A549 (cell line): ENCODE measurements at regions of chr2 and their contacts with region 1.

Region 1: GRCh38 chr2:113138428-113139322 is 11.3 kb downstream of the IL1RN start:
- DNase-seq: peak; percentile 52 to 76
- ATAC-seq: peak; percentile 65 to 88; a peak in 5 of 6 replicates
- H3K4me3 ChIP-seq: no peak overlapping the region
- H3K27ac ChIP-seq: peak overlapping the region; percentile 44 to 66; a peak in 5 of 6 replicates
- H3K4me1 ChIP-seq: 0 out of 3 replicates have a peak, but pooled peaks cover 4% of the 10 kb centered on the region
- CTCF ChIP-seq: peak; percentile 87
- EP300 ChIP-seq: no peak
- POLR2A ChIP-seq: no peak
- RAD21 ChIP-seq: peak; percentile 69 to 74

Region 2: GRCh38 chr2:112229348-112229747 is 909.3 kb before region 1 on chr2:
- CTCF ChIA-PET with region 1: no interaction called
- POLR2A ChIA-PET with region 1: no interaction called
- DNase-seq: peak in 1 of 2 experiments; percentile 33
- ATAC-seq: no peak
- H3K4me3 ChIP-seq: no peak overlapping the region
- H3K27ac ChIP-seq: no peak overlapping the region
- H3K4me1 ChIP-seq: no peaks in the 10 kb centered on the region
- CTCF ChIP-seq: no peak
- EP300 ChIP-seq: no peak
- POLR2A ChIP-seq: no peak
- RAD21 ChIP-seq: no peak

Region 3: DNA sequence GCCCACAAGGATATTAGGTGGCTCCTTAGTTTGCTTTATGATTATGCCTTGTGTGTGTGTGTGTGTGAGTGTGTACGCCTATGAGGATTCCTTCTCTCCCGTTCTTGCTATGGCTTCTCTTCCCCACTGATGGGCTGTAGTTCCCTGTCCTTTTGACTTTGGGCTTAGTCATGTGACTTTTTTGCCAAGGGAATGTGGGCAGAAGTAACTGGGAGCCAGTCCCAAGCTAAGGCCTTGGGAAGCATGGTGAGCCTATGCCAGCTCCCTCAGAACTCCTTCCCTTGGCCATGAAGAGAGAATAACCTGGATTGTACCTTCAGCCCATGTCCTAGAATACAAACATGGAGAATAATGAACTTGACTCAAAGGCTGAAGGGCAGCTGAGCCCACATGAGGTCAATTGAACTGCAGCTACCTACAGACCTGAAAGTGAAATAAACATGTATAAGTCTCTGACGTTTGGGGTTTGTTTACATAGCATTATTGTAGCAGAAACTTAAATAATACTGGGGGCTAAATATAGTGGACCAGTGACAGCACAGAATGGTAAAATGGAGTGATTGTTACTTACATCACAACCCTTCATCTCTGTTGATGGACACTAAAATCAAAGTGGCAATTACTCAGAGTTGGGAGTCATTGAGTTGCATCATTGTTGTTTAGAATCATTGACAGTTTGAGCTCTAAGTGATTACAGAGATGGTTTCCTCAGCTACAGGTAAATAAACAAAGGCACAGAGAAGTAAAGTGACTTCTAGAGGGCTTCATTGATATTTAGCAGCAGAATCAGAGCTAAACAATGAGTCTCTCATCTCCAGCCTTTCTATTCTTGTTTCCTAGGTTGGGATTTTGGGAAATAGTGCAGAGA is 176.1 kb before region 1 on chr2:
- CTCF ChIA-PET with region 1: no interaction called
- POLR2A ChIA-PET with region 1: no interaction called
- DNase-seq: no peak
- ATAC-seq: no peak
- H3K4me3 ChIP-seq: no peak overlapping the region
- H3K27ac ChIP-seq: no peak overlapping the region
- H3K4me1 ChIP-seq: no peaks in the 10 kb centered on the region
- CTCF ChIP-seq: no peak
- EP300 ChIP-seq: no peak
- POLR2A ChIP-seq: no peak
- RAD21 ChIP-seq: no peak

Region 4: DNA sequence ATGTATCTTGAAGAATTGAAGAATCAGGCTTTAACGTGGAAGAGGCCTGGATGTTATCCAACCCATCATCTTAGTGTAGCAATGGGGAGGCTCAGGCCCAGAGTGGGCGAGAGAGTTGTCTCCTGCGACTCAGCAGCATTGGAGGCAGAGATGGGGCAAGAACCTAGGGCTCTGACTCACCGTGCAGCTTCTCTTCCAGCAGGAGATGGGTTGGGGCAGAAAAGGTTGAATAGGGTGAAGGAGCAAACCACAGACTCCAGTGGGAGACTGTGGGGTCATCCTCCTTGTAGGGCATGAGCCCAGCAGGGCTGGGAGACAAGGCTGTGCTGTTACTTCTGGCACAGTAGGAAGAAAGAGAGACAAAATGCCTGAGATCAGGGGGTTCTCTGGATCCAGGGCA is 78.3 kb before region 1 on chr2:
- CTCF ChIA-PET with region 1: no interaction called
- POLR2A ChIA-PET with region 1: no interaction called
- DNase-seq: no peak
- ATAC-seq: peak in 1 of 2 experiments; percentile 27; a peak in 1 of 6 replicates
- H3K4me3 ChIP-seq: no peak overlapping the region
- H3K27ac ChIP-seq: no peak overlapping the region
- H3K4me1 ChIP-seq: no peaks in the 10 kb centered on the region
- CTCF ChIP-seq: no peak
- EP300 ChIP-seq: no peak
- POLR2A ChIP-seq: no peak
- RAD21 ChIP-seq: no peak

Region 5: DNA sequence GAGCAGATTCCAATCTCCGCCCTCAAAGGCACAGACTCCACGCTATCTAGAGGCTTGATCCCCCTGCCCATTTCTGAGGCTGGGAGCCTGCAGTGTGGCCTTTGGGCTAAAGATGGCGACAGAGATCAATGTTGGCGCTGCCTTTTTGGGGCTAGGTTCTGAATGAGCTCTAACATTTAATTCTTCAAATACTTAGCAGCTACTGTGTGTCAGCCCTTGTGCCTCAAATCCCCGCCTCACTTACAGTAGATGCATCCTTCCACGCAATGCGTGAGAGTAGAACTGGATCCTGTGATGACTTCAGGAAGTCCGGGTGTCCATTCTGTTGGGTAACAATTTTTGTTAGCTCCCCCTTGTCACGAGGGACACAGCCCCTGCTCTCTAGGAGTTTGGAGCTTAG is 58.5 kb before region 1 on chr2:
- CTCF ChIA-PET with region 1: interaction called, 52 read pairs
- POLR2A ChIA-PET with region 1: no interaction called
- DNase-seq: peak; percentile 31 to 32
- ATAC-seq: peak; percentile 70 to 91; a peak in 5 of 6 replicates
- H3K4me3 ChIP-seq: no peak overlapping the region
- H3K27ac ChIP-seq: no peak overlapping the region
- H3K4me1 ChIP-seq: peaks cover 3% of the 10 kb centered on the region; the same call in 1 of the 3 replicates
- CTCF ChIP-seq: peak; percentile 80
- EP300 ChIP-seq: no peak
- POLR2A ChIP-seq: no peak
- RAD21 ChIP-seq: peak; percentile 86 to 88

Region 6: DNA sequence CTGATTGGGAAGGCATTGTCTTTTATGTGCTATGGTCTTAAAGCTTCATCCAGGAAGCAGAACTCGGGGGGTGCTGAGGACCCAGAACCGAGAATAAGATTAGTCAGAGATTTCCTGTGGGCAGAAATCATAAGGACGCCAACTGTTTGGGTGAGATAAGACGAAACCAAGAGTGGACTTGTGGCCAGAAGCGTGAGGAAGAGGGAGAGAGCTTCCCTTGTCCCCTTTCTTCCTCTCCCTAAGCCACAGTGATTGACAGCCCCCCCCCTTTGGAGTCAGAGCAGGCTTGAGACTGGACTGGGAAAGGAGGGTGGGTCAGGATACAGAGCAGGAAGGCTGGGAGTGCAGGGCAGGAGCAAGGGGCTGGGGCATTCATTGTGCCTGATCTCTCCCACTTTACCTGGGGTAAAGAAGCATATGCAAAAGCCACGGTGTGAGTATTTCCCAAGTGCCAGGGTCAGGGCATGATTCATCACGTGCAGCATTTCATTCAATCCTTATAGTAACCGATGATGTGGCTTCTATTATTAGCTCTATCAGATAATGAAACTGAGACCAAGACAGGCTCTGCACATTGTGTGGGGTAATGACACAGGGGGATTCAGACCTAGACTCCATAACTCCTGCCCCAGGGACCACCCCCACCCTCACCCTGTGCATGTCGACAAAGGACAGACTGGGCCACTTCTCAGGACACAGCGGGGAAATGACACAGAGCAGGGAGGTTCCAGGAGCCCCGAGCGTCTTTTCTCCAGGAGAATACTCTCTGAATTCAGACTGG is 14.3 kb before region 1 on chr2:
- CTCF ChIA-PET with region 1: interaction called, 65 read pairs
- POLR2A ChIA-PET with region 1: no interaction called
- DNase-seq: no peak
- ATAC-seq: peak; percentile 12 to 54; a peak in 3 of 6 replicates
- H3K4me3 ChIP-seq: no peak overlapping the region
- H3K27ac ChIP-seq: no peak overlapping the region
- H3K4me1 ChIP-seq: peaks cover 15% of the 10 kb centered on the region
- CTCF ChIP-seq: no peak
- EP300 ChIP-seq: no peak
- POLR2A ChIP-seq: no peak
- RAD21 ChIP-seq: no peak

Region 7: GRCh38 chr2:113157118-113157896 is 18.6 kb after region 1 on chr2:
- CTCF ChIA-PET with region 1: interaction called, 46 read pairs
- POLR2A ChIA-PET with region 1: no interaction called
- DNase-seq: no peak
- ATAC-seq: peak; percentile 69 to 81
- H3K4me3 ChIP-seq: peak overlapping the region; percentile 66
- H3K27ac ChIP-seq: peak overlapping the region; percentile 85 to 96
- H3K4me1 ChIP-seq: peaks cover 23% of the 10 kb centered on the region
- CTCF ChIP-seq: no peak
- EP300 ChIP-seq: no peak
- POLR2A ChIP-seq: no peak; the same call in 1 of the 2 replicates
- RAD21 ChIP-seq: no peak

Region 8: GRCh38 chr2:113181258-113182051 is 42.8 kb after region 1 on chr2:
- CTCF ChIA-PET with region 1: interaction called, 39 read pairs
- POLR2A ChIA-PET with region 1: no interaction called
- DNase-seq: no peak
- ATAC-seq: peak in 1 of 2 experiments; percentile 14; a peak in 2 of 6 replicates
- H3K4me3 ChIP-seq: no peak overlapping the region
- H3K27ac ChIP-seq: no peak overlapping the region
- H3K4me1 ChIP-seq: no peaks in the 10 kb centered on the region
- CTCF ChIP-seq: no peak
- EP300 ChIP-seq: no peak
- POLR2A ChIP-seq: no peak
- RAD21 ChIP-seq: no peak

Region 9: DNA sequence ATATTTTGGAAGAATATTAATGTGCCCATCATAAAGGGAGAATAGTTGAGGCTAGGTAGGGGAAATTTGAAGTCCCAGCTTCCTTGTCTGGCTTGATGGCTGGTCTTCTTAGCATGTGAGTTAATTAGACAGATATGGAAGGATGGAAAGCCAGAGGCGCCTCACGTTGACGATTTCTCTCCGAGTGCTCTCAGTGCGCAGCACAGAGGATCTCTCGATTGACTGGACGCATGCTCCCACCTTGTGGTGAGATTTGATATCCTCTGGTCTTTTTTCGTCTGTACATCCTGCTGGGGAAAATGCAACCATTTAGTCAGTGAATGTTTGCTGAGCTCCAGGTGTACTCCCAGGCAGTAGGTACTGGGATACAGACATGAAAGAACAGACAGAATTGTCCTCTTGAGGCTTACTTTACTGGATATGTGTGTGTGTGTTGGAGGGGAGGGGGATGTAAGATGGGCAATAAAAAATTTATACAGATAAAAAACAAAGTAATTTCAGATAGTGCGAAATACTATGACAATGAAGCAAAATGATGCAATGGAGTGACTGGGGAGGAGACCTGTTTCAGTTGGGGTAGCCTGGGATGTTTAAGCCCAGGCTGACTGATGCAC is 231.9 kb after region 1 on chr2:
- CTCF ChIA-PET with region 1: interaction called, 41 read pairs
- POLR2A ChIA-PET with region 1: no interaction called
- DNase-seq: peak; percentile 67 to 89
- ATAC-seq: peak; percentile 96 to 99
- H3K4me3 ChIP-seq: no peak overlapping the region
- H3K27ac ChIP-seq: peak overlapping the region; percentile 70 to 84
- H3K4me1 ChIP-seq: peaks cover 36% of the 10 kb centered on the region
- CTCF ChIP-seq: peak; percentile 91
- EP300 ChIP-seq: no peak
- POLR2A ChIP-seq: no peak
- RAD21 ChIP-seq: peak; percentile 98 to 99